PC-3 (cell line): ENCODE measurements at regions of chr5 and their contacts with region 1.

Region 1: DNA sequence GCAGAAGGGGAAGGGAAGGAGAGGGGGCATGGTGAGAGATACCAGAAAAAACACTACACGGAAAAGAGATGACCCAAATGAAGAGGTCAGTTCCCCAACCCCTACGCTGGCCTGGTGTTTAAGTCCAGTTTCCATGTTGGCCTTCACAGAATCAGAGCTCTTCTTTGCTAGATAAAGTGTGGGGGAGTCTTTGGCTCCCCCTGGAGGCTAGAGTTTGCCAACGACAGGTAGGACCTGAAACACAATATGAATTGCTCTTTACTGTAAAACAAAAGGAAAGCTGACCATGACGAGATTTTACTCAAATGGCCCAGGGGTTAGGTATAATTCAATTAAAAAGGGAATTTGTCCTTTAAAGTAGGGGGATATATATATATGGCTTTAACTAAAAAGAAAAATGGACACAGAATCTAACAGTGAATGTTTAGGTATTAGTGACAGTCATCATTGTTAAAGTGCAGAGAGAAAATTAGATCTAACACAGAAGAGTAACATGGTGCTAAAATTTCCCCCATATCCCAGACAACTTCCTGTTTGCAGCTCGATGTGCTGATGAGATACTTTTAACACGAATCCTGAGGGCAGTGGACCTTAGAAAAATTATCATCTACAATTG is 92.0 kb downstream of the SV2C start:
- DNase-seq: peak; percentile 57
- ATAC-seq: peak; percentile 45; the same call in 1 of the 2 replicates
- H3K4me3 ChIP-seq: no peak overlapping the region; the same call in 1 of the 2 replicates
- H3K27ac ChIP-seq: no peak overlapping the region
- H3K4me1 ChIP-seq: no peaks in the 10 kb centered on the region
- H3K27me3 ChIP-seq: peaks cover 12% of the 10 kb centered on the region; the same call in 1 of the 2 replicates
- CTCF ChIP-seq: peak; percentile 75

Region 2: DNA sequence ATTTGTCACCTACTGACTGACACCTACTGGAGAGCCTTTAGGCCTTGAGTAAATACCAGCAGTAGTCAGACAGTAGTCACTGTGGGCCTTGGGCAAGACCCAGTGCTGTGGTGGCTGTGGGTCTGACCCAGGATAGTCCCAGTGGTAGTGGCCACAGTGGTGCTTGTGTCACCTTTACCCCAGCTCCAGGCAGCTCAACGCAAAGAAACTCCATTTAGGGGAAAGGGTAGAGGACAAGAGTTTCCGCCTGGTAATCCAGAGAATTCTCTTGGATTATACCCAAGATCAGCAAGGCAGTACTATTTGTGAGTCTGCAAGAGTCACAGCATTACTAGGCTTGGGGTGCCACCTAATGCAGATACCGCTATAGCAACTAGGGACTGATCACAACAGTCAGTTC is 692.7 kb before region 1 on chr5:
- CTCF ChIA-PET with region 1: interaction called, 13 read pairs
- POLR2A ChIA-PET with region 1: no interaction called
- intact Hi-C with region 1: no loop called
- DNase-seq: peak; percentile 36
- ATAC-seq: no peak; the same call in 1 of the 2 replicates
- H3K4me3 ChIP-seq: no peak overlapping the region
- H3K27ac ChIP-seq: no peak overlapping the region
- H3K4me1 ChIP-seq: peaks cover 4% of the 10 kb centered on the region; the same call in 1 of the 2 replicates
- H3K27me3 ChIP-seq: no peaks in the 10 kb centered on the region
- CTCF ChIP-seq: no peak

Region 3: GRCh38 chr5:75734913-75735789 is 440.0 kb before region 1 on chr5:
- CTCF ChIA-PET with region 1: interaction called, 7 read pairs
- POLR2A ChIA-PET with region 1: no interaction called
- intact Hi-C with region 1: loop called (anchors 2 kb)
- DNase-seq: peak; percentile 46
- ATAC-seq: peak; percentile 94
- H3K4me3 ChIP-seq: no peak overlapping the region
- H3K27ac ChIP-seq: no peak overlapping the region
- H3K4me1 ChIP-seq: no peaks in the 10 kb centered on the region
- H3K27me3 ChIP-seq: peaks cover 8% of the 10 kb centered on the region; the same call in 1 of the 2 replicates
- CTCF ChIP-seq: peak; percentile 66